H1 (cell line): ENCODE measurements at regions of chr18 and their contacts with region 1.

Region 1: DNA sequence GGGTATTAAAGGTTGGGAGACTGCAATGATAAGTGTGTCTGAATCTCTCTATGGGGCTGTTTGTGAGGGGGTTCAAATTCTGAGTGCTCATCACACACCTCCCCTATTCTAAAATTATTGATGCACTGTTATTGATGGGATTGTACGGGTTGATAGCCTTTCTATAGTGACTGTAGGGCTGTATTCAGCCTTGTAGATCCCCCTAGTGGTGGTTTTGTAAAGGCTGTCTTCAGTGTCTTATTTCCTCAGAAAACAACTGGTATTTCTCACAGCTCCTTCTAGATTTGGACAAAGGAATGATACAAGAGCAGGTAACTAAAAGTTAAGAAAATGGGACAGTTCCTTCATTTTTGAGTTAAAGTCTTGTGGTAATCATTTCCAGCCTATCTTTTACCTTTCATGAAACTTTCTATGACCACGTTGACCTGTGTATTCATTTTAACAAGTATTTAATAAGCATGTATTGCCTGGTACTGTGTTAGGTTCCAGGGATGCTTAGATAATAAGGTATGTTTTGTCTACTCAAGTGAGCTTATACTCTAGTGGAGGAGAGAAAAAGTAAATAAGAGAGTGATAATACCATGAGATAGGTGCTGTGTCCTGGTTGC is 21.2 kb downstream of the SMAD4 start:
- DNase-seq: no peak
- H3K4me3 ChIP-seq: no peak overlapping the region
- H3K27ac ChIP-seq: no peak overlapping the region
- H3K4me1 ChIP-seq: peaks cover 0 to 10% (median 0%) of the 10 kb centered on the region in 4 experiments; a peak in 1 of 7 replicates
- H3K27me3 ChIP-seq: no peaks in the 10 kb centered on the region
- CTCF ChIP-seq: peak in 2 of 3 experiments; percentile 70 to 78; a peak in 3 of 4 replicates
- EP300 ChIP-seq: no peak
- POLR2A ChIP-seq: no peak
- RAD21 ChIP-seq: peak; percentile 82 to 87

Region 2: DNA sequence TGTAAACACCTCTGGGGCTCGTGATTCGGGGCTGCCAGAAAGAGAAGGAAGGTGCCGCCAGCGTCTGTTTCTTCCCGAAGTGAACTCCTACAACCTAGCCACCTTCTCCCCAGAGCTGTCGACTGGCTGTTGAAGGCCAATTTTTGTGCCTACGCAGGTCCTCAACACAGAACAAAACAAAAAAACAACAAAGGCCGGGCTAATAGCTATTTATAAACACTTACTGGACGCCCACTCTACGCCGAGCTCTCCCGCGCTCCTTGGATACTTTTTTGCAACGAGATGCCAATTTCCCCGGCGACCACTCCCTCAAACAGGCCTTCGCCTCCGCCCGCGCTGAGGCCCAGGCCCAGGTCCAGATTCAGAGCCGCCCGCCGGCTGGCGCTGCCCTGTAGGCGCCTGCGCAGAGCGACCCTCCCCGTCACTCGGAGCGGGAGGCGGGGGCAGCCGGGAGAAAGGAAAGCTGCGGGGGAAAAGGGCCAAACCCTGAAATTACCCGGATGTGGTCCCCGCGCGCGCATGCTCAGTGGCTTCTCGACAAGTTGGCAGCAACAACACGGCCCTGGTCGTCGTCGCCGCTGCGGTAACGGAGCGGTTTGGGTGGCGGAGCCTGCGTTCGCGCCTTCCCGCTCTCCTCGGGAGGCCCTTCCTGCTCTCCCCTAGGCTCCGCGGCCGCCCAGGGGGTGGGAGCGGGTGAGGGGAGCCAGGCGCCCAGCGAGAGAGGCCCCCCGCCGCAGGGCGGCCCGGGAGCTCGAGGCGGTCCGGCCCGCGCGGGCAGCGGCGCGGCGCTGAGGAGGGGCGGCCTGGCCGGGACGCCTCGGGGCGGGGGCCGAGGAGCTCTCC is 21.3 kb before region 1 on chr18 and contains the start of gene SMAD4:
- CTCF ChIA-PET with region 1: interaction called, 12 read pairs
- POLR2A ChIA-PET with region 1: interaction called, 5 read pairs
- DNase-seq: peak; percentile 90 to 100
- H3K4me3 ChIP-seq: peak within 1 kb of the TSS; percentile 51 to 88 (median 77)
- H3K27ac ChIP-seq: peak within 1 kb of the TSS; percentile 97
- H3K4me1 ChIP-seq: peaks cover 5 to 9% (median 7%) of the 10 kb centered on the region in 4 experiments; a peak in 4 of 7 replicates
- H3K27me3 ChIP-seq: no peaks in the 10 kb centered on the region
- CTCF ChIP-seq: no peak
- EP300 ChIP-seq: no peak
- POLR2A ChIP-seq: peak; percentile 94 to 97
- RAD21 ChIP-seq: no peak
- total RNA-seq, gene SMAD4: 134 and 139 TPM in 2 replicates

Region 3: DNA sequence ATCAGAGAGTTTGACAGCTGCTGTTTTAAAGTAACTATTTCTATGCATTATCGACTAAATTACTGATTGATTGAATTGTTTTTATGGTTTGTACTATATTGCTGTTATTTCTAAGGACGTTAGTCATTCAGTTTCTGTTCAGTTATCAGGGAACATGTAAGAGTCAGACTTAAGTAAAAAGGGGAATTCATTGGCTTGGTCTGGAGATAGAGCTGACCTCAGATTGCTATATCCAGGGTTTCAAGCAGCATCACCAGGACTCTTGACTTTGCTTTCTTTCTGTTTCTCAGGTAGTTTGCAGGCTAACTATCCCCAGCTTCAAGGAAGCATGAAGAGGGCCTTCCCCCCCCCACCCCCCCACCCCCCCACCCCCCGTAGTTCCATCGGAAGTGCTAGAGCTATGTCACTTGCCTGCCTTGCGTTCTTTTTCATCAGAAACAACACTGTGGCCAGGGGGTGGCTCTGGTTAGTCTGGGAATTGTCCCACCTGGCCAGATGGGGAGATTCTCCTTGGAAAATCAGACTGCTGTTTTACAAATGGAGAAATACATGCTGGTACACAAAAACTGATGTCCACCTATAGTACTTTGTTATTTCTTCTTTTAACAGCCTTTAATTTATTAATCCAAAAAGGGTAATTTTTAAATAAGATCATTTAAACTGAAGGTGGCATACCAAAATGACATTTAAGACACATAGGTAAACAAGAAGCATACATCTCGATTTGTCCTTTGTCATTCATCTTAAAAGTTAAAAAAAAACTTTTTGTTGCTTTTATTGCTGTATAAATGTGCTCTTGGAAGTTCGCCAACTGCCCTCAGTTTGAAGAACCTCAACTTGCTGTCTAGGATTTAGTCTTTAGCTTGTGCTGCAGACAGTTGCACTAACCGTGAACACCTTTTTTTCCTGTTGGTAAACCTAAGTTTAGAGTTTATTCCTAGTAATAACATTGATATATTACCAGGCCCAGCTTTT is 11.8 kb before region 1 on chr18:
- CTCF ChIA-PET with region 1: interaction called, 15 read pairs
- POLR2A ChIA-PET with region 1: interaction called, 4 read pairs
- DNase-seq: no peak
- H3K4me3 ChIP-seq: peak overlapping the region in 1 of 4 experiments; percentile 14; a peak in 1 of 8 replicates
- H3K27ac ChIP-seq: no peak overlapping the region
- H3K4me1 ChIP-seq: peaks cover 0 to 20% (median 14%) of the 10 kb centered on the region in 4 experiments; a peak in 4 of 7 replicates
- H3K27me3 ChIP-seq: no peaks in the 10 kb centered on the region
- CTCF ChIP-seq: no peak
- EP300 ChIP-seq: no peak
- POLR2A ChIP-seq: no peak
- RAD21 ChIP-seq: no peak

Region 4: DNA sequence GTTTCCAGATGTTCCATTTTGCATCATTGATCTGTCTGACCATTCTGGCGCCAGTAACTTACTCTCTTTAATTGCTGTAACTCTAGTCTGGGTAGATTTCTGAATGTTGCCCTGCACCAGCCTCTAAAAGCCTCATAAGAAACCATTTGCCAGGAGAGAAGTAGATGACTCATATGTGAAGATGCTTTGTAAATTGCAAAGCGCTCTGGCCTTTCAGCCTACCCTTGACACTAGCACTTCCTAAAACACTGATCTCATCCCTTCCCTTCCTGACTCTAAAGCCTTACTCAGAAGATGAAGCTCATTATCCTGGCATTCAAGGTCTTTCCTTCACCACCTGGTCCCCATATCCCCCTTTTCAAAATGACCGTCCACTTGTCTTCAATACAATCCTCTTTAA is 339.5 kb after region 1 on chr18:
- CTCF ChIA-PET with region 1: no interaction called
- POLR2A ChIA-PET with region 1: no interaction called
- DNase-seq: no peak
- H3K4me3 ChIP-seq: no peak overlapping the region
- H3K27ac ChIP-seq: no peak overlapping the region
- H3K4me1 ChIP-seq: no peaks in the 10 kb centered on the region
- H3K27me3 ChIP-seq: no peaks in the 10 kb centered on the region
- CTCF ChIP-seq: no peak
- EP300 ChIP-seq: no peak
- POLR2A ChIP-seq: no peak
- RAD21 ChIP-seq: no peak